Transverse colon (tissue), 4 donors: ENCODE measurements at regions of chr12 and their contacts with region 1.

Region 1: DNA sequence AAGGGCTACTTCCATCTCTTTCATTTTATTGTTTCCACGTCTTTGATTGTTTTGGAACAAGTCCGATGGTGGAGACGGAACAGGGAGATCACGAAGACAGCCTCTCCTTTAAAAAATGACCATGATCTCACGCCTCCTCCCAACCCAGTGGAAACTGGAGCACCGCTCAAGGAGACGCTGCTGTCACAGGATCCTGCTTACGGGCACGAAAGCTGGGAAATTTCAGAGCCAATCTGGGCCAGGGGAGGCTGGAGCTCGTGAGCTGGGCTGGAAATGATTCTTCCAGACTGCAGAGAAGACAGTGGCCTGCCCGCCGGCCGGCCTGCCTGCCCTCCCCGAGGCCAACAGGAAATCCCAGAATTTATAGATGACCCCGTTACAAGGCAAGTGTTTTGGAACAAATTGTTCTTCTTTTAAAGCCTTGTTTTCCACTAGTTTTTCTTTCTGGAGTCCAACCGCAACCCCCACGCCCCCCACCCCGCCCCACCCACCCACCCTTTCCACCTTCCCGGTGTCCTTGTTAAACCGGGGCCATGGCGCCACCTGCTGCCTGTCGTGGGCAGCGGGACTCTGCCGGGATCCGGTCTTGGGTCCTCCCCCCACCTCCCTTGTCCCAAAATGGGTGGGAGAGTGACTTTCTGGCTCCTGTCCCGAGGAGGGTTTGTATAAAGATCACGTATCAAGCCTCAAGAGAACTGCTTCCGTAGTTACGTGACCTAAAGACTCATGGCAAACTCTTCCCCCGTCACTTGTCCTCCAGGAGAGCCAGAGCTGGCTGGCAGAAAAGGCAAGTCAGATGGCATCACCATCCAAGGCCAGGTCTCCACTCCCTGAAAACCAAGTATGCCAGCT is 40.3 kb downstream of the MAP1LC3B2 start:
- DNase-seq: peak; percentile 83
- H3K4me3 ChIP-seq: peak overlapping the region in 3 of 4 donors; percentile 12 to 40 (median 25)
- H3K27ac ChIP-seq: peak overlapping the region; percentile 63 to 79 (median 72)
- H3K4me1 ChIP-seq: peaks cover 4 to 27% (median 16%) of the 10 kb centered on the region in 4 donors
- H3K27me3 ChIP-seq: no peaks in the 10 kb centered on the region
- CTCF ChIP-seq: peak; percentile 42 to 77 (median 64)
- EP300 ChIP-seq: peak; percentile 49
- POLR2A ChIP-seq: peak; percentile 26

Region 2: DNA sequence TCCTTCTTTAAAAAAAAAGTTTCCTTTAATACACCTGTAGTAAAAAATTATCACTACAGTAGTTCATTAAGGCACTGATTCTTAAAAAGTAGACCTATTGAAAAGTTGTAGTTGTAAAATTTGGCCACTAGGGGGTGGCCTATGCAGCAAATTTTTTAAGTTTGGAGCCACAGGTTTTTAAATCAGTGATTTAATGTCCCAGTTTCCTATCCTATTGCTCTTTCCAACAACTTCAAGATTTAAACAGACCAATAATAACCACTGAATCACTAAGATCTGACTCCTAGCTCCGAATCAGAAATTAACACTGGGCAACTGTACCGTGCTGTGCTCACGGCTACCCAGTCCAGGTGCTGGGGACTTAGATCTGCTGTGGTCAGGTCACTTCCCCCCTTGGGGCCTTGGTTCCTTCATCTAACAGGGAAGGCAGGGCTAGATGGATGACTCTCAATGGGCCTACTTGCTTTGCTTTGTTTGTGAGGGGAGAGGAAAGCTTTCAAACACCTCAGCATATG is 601.3 kb before region 1 on chr12:
- in situ Hi-C with region 1: loop called (anchors 5 to 25 kb)
- intact Hi-C with region 1: no loop called
- DNase-seq: peak; percentile 14
- H3K4me3 ChIP-seq: no peak overlapping the region
- H3K27ac ChIP-seq: peak overlapping the region in 2 of 4 donors; percentile 12 to 26
- H3K4me1 ChIP-seq: peaks cover 0 to 17% (median 11%) of the 10 kb centered on the region in 4 donors
- H3K27me3 ChIP-seq: no peaks in the 10 kb centered on the region
- CTCF ChIP-seq: peak; percentile 77 to 85 (median 82)
- EP300 ChIP-seq: no peak
- POLR2A ChIP-seq: no peak

Region 3: DNA sequence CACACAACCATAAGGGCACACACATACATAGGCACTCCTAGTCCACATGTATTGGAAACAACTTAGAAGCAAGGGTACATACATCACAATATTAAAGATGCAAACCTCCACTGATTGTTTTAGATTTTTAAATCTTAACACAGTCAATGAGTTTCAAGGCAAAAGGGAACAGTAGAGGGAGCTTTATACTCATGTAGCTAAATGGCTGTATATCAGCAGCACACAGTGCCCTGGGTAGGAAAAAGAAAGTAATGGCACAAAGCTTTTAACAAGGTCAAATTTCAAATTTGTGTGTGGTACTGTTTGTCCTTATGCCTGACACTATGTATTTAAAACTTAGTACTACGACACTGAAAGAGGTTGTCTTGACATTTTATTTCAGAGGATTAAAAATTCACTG is 584.0 kb before region 1 on chr12:
- in situ Hi-C with region 1: loop called in 1 of 4 experiments (anchors 25 kb)
- intact Hi-C with region 1: loop called (anchors 10 kb)
- DNase-seq: no peak
- H3K4me3 ChIP-seq: no peak overlapping the region
- H3K27ac ChIP-seq: no peak overlapping the region
- H3K4me1 ChIP-seq: peaks cover 0 to 2% (median 0%) of the 10 kb centered on the region in 4 donors
- H3K27me3 ChIP-seq: no peaks in the 10 kb centered on the region
- CTCF ChIP-seq: peak; percentile 33 to 55 (median 39)
- EP300 ChIP-seq: no peak
- POLR2A ChIP-seq: no peak

Region 4: GRCh38 chr12:116277393-116278278 is 321.9 kb before region 1 on chr12 and contains the start of gene MED13L:
- in situ Hi-C with region 1: loop called in 1 of 4 experiments (anchors 10 kb)
- intact Hi-C with region 1: loop called (anchors 2 kb)
- DNase-seq: peak; percentile 91
- H3K4me3 ChIP-seq: peak within 1 kb of the TSS; percentile 60 to 94 (median 90)
- H3K27ac ChIP-seq: peak within 1 kb of the TSS; percentile 95 to 98 (median 96)
- H3K4me1 ChIP-seq: peaks cover 17 to 45% (median 26%) of the 10 kb centered on the region in 4 donors
- H3K27me3 ChIP-seq: no peaks in the 10 kb centered on the region
- CTCF ChIP-seq: peak in 3 of 5 experiments; percentile 13 to 40 (median 38)
- EP300 ChIP-seq: no peak
- POLR2A ChIP-seq: peak; percentile 44
- total RNA-seq, gene MED13L: 126 to 194 (median 154) TPM

Region 5: DNA sequence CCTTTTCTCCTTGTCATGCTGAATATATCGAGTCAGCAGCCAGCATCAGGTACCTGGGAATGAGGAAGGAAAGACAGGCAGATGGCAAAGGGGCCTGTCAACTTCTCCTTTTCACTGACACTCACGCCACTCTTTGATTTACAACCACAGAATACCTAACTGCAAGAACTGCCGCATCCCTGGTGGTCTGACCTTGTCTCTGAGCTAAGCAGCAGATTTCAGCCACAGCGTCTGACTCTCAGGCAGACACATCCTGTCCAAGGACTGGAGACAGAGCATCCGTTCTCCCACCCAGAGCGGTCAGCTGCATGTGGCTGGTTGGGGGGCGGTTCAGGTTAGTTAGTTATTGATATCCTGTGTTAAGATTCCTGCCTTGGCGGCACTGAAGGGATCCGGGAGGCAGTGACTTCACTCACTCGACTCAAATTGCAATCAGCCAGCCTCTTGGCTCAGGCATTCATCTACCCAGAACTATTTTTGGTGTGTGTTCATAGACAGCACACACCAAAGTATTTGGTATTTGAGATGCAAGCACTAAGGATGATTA is 51.5 kb before region 1 on chr12:
- in situ Hi-C with region 1: loop called in 1 of 4 experiments (anchors 10 kb)
- intact Hi-C with region 1: no loop called
- DNase-seq: no peak
- H3K4me3 ChIP-seq: no peak overlapping the region
- H3K27ac ChIP-seq: no peak overlapping the region
- H3K4me1 ChIP-seq: peaks cover 0 to 3% (median 0%) of the 10 kb centered on the region in 4 donors
- H3K27me3 ChIP-seq: no peaks in the 10 kb centered on the region
- CTCF ChIP-seq: no peak
- EP300 ChIP-seq: no peak
- POLR2A ChIP-seq: no peak